ENCODE measurements at regions of chr16 and their contacts with region 1.

Region 1: DNA sequence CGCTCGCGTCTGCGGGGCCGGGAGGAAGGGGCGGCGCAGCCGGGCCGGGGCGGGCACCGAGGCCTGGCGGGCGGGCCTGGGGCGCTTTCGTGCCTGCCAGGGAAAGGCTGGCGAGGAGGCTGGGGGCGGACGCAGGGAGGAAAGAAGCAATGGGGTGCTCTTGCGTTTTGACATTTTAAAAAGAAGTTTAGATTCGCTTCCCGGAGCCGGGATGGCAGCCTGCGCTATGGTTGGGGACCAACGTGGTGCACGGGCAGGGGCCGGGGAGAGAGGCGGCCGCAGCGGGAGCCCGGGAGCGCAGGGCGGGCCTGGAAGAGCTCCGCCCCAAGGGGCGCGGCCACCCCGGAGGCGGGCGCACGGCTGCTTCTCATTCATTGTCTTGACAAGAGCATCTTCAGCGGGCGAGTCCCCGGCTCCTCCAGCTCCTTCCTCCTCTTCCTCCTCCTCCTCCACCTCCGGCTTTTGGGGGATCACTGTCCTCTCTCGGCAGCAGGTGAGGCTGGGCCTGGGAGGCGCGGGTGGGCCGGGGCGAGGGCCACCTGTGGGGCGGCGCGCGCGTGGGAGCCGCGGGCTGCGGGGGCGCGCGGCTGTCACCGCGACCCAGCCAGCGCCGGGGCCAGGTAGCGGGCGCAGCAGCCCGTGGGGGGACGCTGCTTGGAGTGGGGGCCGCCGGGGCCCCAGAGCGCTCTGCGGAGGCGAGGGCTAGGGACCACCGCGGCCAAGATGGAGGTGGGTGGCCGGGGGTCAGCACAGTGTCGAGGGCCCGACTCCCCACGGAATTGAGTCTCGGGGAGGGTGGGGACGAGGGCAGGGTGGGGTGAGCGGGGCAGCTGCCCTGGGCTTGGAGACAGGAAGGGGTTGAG is at the start of gene CORO1A:
- DNase-seq: peak; percentile 80 to 87 (median 84)
- H3K4me3 ChIP-seq: peak within 1 kb of the TSS; percentile 91 to 93
- H3K4me3 Mint-ChIP-seq: peak within 1 kb of the TSS; percentile 94 to 99 (median 98)
- H3K27ac ChIP-seq: peak within 1 kb of the TSS; percentile 77
- H3K27ac Mint-ChIP-seq: peak within 1 kb of the TSS; percentile 96 to 99 (median 97)
- H3K4me1 ChIP-seq: peaks cover 40% of the 10 kb centered on the region
- H3K4me1 Mint-ChIP-seq: peaks cover 15 to 59% (median 29%) of the 10 kb centered on the region in 4 donors
- H3K27me3 ChIP-seq: no peaks in the 10 kb centered on the region
- H3K27me3 Mint-ChIP-seq: no peaks in the 10 kb centered on the region
- total RNA-seq, gene CORO1A: 745 to 769 TPM

Region 2: DNA sequence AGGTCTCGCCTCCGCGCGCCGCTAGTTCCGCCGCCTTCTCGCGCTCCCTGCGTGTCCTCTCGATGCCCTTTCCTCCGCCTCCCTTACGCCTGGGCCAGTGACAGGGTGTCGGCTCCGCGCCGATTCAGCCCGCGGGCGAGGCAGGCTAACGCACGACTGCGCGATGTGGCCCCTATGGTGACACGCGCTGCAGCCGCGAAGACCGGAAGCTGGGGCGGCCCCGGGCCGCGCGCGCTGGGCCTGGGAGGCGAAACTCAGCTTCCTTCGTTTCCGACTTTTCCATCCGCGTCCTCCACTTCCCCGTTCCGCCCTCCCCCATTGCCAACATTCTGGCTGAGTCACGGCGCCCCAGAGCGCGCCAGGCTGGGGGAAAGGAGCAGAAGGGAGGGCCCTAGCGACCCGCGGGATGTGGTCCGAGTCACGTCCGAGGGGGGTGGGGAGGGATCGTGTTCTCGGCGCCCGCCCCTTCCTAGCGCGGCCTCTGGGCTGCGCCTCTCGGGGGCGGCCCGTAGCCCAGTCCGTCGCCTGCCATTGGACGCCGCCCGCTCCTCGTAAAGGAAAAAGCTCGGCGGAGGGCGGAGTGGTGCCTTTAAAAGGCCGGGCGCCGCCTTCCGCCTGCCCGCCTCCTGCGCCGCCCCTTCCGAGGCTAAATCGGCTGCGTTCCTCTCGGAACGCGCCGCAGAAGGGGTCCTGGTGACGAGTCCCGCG is 118.2 kb before region 1 on chr16 and contains the start of gene ALDOA:
- CTCF ChIA-PET with region 1: interaction called, 3 read pairs
- POLR2A ChIA-PET with region 1: interaction called, 132 read pairs
- intact Hi-C with region 1: no loop called
- DNase-seq: peak; percentile 94 to 96 (median 94)
- H3K4me3 ChIP-seq: peak within 1 kb of the TSS; percentile 77 to 93
- H3K4me3 Mint-ChIP-seq: peak within 1 kb of the TSS; percentile 98 to 100 (median 99)
- H3K27ac ChIP-seq: peak within 1 kb of the TSS; percentile 94
- H3K27ac Mint-ChIP-seq: peak within 1 kb of the TSS; percentile 95 to 100 (median 97)
- H3K4me1 ChIP-seq: peaks cover 47% of the 10 kb centered on the region
- H3K4me1 Mint-ChIP-seq: peaks cover 17 to 58% (median 33%) of the 10 kb centered on the region in 4 donors
- H3K27me3 ChIP-seq: no peaks in the 10 kb centered on the region
- H3K27me3 Mint-ChIP-seq: no peaks in the 10 kb centered on the region
- total RNA-seq, gene ALDOA: 558 to 563 TPM

Region 3: DNA sequence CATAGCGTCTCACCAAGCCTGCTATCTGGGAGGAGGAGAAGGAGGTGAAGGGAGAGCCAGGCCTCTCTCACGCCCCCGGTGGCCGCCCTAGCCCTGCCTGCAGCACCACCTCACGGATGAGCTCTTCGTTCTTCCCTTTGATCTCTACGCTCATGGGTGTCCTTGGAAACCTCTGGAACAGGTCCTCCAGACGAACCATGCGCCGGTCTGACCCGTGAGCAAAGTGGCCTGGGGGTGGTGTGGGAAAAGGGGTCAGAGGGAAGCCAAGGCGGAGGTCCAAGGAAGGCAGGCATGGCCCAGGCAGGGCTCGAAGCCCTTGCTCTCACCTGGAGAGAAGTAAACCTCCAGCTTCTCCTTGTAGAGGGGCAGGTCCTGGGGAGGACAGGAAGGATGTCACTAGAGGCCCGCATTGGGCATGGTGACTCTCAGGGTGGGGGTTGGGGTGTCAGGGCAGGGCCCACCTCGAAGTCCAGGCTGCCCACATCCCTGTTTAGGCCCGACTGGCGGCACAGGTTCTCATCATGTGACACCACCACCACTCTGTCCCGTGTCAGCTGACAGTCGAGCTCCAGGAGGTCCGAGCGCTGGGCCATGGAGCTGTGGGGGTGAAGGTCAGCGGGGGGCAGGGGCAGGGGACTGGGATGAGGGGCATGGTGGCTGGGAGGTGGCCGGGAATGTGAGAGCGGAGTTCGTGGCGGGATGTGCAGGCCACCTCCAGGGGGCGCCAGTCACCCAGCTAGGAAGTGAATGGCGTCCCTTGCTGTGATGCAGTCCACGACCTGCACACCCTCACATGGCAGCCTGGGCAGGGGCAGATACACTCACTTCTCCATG is 71.0 kb before region 1 on chr16:
- CTCF ChIA-PET with region 1: interaction called, 7 read pairs
- POLR2A ChIA-PET with region 1: interaction called, 120 read pairs
- intact Hi-C with region 1: no loop called
- DNase-seq: peak in 2 of 5 donors; percentile 35 to 45
- H3K4me3 ChIP-seq: no peak overlapping the region
- H3K4me3 Mint-ChIP-seq: peak overlapping the region in 1 of 8 donors; percentile 10
- H3K27ac ChIP-seq: no peak overlapping the region
- H3K27ac Mint-ChIP-seq: peak overlapping the region in 2 of 7 donors; percentile 35 to 66
- H3K4me1 ChIP-seq: peaks cover 27% of the 10 kb centered on the region
- H3K4me1 Mint-ChIP-seq: peaks cover 11 to 25% (median 17%) of the 10 kb centered on the region in 4 donors
- H3K27me3 ChIP-seq: no peaks in the 10 kb centered on the region
- H3K27me3 Mint-ChIP-seq: no peaks in the 10 kb centered on the region

Region 4: GRCh38 chr16:30142672-30143346 is 40.7 kb before region 1 on chr16:
- CTCF ChIA-PET with region 1: interaction called, 9 read pairs
- POLR2A ChIA-PET with region 1: interaction called, 28 read pairs
- intact Hi-C with region 1: no loop called
- DNase-seq: peak in 4 of 5 donors; percentile 39 to 48 (median 43)
- H3K4me3 ChIP-seq: no peak overlapping the region
- H3K4me3 Mint-ChIP-seq: peak overlapping the region in 1 of 8 donors; percentile 25
- H3K27ac ChIP-seq: no peak overlapping the region
- H3K27ac Mint-ChIP-seq: peak overlapping the region in 5 of 7 donors; percentile 25 to 85 (median 62)
- H3K4me1 ChIP-seq: peaks cover 20% of the 10 kb centered on the region
- H3K4me1 Mint-ChIP-seq: peaks cover 12 to 27% (median 13%) of the 10 kb centered on the region in 4 donors
- H3K27me3 ChIP-seq: no peaks in the 10 kb centered on the region
- H3K27me3 Mint-ChIP-seq: no peaks in the 10 kb centered on the region

Region 5: DNA sequence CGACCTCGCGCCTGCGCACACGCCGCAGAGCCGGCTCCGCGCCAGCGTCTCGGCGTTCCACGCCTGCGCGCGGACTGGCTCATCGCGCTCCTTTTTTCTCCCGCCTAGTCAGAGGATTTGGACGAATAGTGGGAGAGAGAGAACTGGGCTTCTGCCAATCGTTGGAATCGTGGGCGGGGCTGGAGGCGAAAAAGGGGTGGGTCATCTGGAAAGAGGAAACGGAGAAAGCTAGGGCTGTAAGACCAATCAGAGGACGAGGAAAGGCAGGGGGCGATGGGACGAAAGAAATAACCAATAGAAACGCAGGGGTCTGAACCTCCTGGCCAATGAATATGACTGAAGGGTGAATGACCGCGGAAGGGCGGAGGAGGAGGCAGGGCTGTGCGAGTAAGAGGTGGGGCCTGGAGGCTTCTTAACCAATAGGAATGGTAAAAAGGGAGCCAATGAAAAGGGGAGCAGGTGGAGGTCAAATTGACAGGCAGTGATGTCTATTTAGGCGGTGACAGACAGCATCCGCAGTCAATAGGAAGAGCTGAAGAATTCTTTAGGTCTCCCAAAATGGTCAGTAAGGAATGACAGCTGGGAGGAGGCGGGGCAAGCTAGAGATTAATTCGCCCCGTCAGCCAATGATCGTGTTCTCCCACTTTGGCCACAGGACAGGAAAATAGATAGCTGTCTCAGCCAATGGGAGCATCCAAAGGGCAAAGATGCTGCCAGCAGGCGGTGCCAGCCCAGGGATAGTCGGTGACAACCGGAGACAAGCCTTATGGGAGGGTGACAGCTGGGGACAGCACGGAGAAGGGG is 187.2 kb after region 1 on chr16 and contains the start of gene TBC1D10B:
- CTCF ChIA-PET with region 1: interaction called, 6 read pairs
- POLR2A ChIA-PET with region 1: interaction called, 12 read pairs
- intact Hi-C with region 1: no loop called
- DNase-seq: peak; percentile 99 to 100 (median 100)
- H3K4me3 ChIP-seq: peak within 1 kb of the TSS; percentile 67 to 88
- H3K4me3 Mint-ChIP-seq: peak within 1 kb of the TSS; percentile 87 to 94 (median 90)
- H3K27ac ChIP-seq: peak within 1 kb of the TSS; percentile 72
- H3K27ac Mint-ChIP-seq: peak within 1 kb of the TSS; percentile 83 to 99 (median 95)
- H3K4me1 ChIP-seq: peaks cover 46% of the 10 kb centered on the region
- H3K4me1 Mint-ChIP-seq: peaks cover 43 to 60% (median 49%) of the 10 kb centered on the region in 4 donors
- H3K27me3 ChIP-seq: no peaks in the 10 kb centered on the region
- H3K27me3 Mint-ChIP-seq: peaks cover 0 to 2% of the 10 kb centered on the region in 2 donors
- total RNA-seq, gene TBC1D10B: 47.0 to 55.3 TPM

Measured in CD4-positive, alpha-beta memory T cell (primary cell).